ENCODE measurements at regions of chr1 and their contacts with region 1.

Region 1: GRCh38 chr1:184754476-184755225 is at the start of gene EDEM3:
- DNase-seq: peak; percentile 95
- ATAC-seq: peak; percentile 92
- H3K4me3 ChIP-seq: peak within 1 kb of the TSS; percentile 93
- H3K27ac ChIP-seq: peak within 1 kb of the TSS; percentile 80
- H3K4me1 ChIP-seq: peaks cover 37% of the 10 kb centered on the region
- H3K27me3 ChIP-seq: no peaks in the 10 kb centered on the region
- CTCF ChIP-seq: no peak
- total RNA-seq, gene EDEM3: 12.8 and 16.2 TPM in 2 replicates

Region 2: GRCh38 chr1:184792450-184792969 is 37.9 kb after region 1 on chr1:
- CTCF ChIA-PET with region 1: no interaction called
- POLR2A ChIA-PET with region 1: no interaction called
- intact Hi-C with region 1: loop called (anchors 1 kb)
- DNase-seq: peak; percentile 93
- ATAC-seq: peak; percentile 98
- H3K4me3 ChIP-seq: peak overlapping the region; percentile 17
- H3K27ac ChIP-seq: peak overlapping the region; percentile 100
- H3K4me1 ChIP-seq: peaks cover 42% of the 10 kb centered on the region
- H3K27me3 ChIP-seq: no peaks in the 10 kb centered on the region
- CTCF ChIP-seq: no peak

Region 3: DNA sequence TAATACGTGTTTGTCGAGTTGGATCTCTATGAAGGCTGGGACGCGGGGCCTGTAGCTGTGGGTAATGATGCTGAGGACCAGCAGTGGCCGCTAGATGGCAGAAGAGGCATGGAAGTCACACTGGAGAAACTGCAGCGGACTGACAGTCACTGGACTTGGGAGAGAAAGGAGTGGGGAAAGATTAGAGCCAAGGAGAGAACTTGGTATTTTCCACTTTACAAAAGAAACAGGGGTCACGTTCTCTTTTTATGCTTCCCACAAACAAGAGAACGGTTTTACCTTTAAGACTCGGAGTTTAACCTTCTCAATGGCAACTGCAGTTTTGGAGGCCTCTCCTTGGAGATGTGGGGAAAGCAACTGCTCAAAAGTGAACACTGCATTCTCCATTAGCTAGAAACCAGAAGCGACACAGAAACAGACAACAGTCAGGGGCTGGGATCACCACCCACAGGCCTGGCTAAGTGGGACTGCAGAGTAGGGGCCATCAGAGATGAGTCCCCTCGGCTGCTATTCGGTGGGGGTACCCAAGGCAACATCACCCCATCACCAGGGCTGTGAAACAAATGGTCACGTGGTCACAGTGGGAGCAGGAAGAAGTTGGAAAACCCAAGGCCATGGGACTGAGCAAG is 51.1 kb after region 1 on chr1:
- CTCF ChIA-PET with region 1: no interaction called
- POLR2A ChIA-PET with region 1: no interaction called
- intact Hi-C with region 1: loop called (anchors 2 kb)
- DNase-seq: peak; percentile 78
- ATAC-seq: peak; percentile 94
- H3K4me3 ChIP-seq: no peak overlapping the region
- H3K27ac ChIP-seq: no peak overlapping the region
- H3K4me1 ChIP-seq: peaks cover 28% of the 10 kb centered on the region
- H3K27me3 ChIP-seq: no peaks in the 10 kb centered on the region
- CTCF ChIP-seq: peak; percentile 78

Region 4: DNA sequence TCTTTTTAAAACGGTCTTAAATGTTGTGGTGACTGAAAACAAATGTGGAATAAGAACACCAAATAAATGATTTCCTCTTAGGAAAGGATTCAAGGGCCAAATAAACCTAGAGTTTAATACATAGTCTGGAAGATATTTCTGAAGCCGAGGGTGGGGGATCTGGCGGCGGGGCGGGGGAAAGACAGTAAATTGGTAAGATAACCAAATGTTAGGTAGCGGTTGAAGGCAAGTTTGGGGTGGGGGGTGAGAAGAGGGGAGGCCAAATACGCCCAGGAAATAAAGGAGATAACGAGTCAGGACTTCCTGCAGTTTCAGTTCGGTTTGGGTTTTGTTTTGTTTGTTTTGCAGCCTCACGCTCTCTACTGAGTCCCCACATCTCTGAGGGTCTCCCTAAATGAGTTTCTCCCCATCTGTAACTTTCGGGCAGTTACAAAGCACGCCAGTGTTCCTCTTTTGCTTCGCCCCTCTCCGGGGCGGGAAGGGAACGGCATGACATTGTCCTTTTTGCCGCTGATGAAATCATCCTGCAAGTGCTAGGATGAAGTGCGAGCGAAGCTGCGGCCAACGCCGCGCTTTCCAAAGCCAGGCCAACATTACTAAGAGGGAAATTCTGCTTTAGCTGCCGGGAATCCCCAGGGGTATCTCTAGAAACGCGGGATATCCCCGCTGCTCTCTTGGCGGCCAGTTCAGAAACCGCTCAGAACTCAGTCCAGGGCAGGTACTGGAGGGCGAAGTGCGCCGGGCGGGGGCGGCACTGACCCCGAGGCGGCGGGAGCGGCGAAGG is 218.8 kb after region 1 on chr1:
- CTCF ChIA-PET with region 1: no interaction called
- POLR2A ChIA-PET with region 1: no interaction called
- intact Hi-C with region 1: loop called (anchors 2 kb)
- DNase-seq: peak; percentile 28
- ATAC-seq: peak; percentile 58
- H3K4me3 ChIP-seq: peak overlapping the region; percentile 94
- H3K27ac ChIP-seq: no peak overlapping the region
- H3K4me1 ChIP-seq: peaks cover 10% of the 10 kb centered on the region
- H3K27me3 ChIP-seq: no peaks in the 10 kb centered on the region
- CTCF ChIP-seq: no peak

Measured in PC-3 (cell line).